ENCODE measurements at regions of chr3 and their contacts with region 1.

Region 1: DNA sequence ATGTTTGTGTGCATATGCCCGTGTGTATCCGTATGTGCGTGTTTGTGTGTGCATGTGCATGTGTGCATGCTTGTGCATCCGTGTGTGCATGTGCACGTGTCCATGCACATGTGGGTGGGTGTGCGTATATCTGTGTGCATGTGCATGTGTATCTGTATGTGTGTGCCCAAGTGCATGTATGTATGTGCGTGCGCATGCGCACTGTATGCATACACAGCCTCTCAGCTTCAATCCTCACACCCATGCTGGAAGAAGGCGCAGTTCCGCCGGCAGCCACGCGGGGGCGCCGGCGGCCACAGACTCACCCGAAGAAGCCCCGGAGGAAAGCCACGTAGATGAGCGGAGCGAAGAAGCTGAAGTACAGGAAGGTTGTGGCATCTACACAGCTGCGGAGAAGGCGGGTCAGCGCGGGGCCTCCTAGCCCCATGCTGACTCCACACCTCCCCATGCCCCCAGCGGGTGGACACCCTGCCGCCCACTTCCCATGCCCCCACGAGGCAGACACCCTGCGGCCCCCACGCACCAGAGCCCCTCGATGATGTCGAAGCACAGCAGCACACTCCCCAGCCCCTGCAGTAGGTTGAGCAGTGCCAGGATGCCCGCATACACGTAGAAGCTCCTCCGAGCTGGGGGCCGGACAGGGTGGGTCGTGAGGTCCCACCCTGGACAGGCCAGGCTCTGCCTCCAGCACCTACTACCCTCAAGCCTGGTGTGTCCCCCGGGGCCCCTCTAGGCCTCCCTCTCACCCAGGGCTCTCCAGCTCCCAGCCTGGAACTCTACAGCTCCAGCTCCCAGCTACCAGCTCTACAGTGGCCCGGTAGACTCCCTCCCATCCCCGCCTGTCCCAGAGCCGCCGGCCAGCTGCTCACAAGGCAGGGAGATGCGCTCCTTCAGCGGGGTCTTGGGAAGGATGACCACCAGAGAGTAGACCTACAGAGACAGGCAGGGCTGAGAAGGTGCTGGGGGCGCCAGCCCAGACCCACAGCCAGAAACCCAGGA is 15.4 kb downstream of the TPRA1 start:
- DNase-seq: peak; percentile 89
- H3K4me3 Mint-ChIP-seq: no peak overlapping the region
- H3K27ac Mint-ChIP-seq: peak overlapping the region; percentile 55
- H3K4me1 Mint-ChIP-seq: peaks cover 8% of the 10 kb centered on the region
- H3K27me3 Mint-ChIP-seq: no peaks in the 10 kb centered on the region

Region 2: GRCh38 chr3:127590593-127591477 is 15.7 kb after region 1 on chr3 and contains the start of gene TPRA1:
- CTCF ChIA-PET with region 1: interaction called, 44 read pairs
- POLR2A ChIA-PET with region 1: interaction called, 14 read pairs
- DNase-seq: peak; percentile 82
- H3K4me3 Mint-ChIP-seq: peak within 1 kb of the TSS; percentile 95
- H3K27ac Mint-ChIP-seq: peak within 1 kb of the TSS; percentile 97
- H3K4me1 Mint-ChIP-seq: peaks cover 31% of the 10 kb centered on the region
- H3K27me3 Mint-ChIP-seq: no peaks in the 10 kb centered on the region
- total RNA-seq, gene TPRA1: 22.6 to 23.3 TPM

Region 3: DNA sequence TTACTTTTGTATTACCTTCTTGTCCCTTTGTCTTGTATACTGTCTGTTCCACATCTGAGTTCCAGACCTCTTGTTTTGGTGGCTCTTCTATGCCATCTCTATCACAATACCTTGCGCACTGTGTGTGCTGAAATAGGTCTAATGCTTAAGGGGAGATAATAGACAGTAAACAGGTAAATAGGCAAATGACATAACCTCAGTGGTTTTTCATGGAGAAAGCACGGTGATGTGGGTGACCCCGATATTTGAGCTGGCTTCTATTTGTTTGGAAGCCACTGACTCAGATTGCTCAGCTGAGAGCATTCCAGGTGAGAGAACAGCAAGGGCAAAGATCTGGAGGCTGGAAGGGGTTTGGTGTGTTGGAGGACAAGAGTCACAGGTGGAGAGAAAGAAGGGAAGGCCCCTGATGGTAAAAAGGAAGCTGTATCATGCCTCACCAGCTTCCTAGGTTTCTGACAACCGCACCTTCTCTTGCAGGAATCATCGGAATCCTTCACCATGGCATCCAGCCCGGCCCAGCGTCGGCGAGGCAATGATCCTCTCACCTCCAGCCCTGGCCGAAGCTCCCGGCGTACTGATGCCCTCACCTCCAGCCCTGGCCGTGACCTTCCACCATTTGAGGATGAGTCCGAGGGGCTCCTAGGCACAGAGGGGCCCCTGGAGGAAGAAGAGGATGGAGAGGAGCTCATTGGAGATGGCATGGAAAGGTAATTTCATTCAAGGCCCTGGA is 23.8 kb after region 1 on chr3:
- CTCF ChIA-PET with region 1: interaction called, 30 read pairs
- POLR2A ChIA-PET with region 1: interaction called, 16 read pairs
- DNase-seq: no peak
- H3K4me3 Mint-ChIP-seq: peak overlapping the region; percentile 89
- H3K27ac Mint-ChIP-seq: peak overlapping the region; percentile 85
- H3K4me1 Mint-ChIP-seq: peaks cover 53% of the 10 kb centered on the region
- H3K27me3 Mint-ChIP-seq: no peaks in the 10 kb centered on the region

Region 4: GRCh38 chr3:127628788-127629466 is 53.7 kb after region 1 on chr3 and contains the start of gene PODXL2:
- CTCF ChIA-PET with region 1: interaction called, 10 read pairs
- POLR2A ChIA-PET with region 1: no interaction called
- DNase-seq: peak; percentile 21
- H3K4me3 Mint-ChIP-seq: peak within 1 kb of the TSS; percentile 68
- H3K27ac Mint-ChIP-seq: no peak within 1 kb of the TSS
- H3K4me1 Mint-ChIP-seq: peaks cover 25% of the 10 kb centered on the region
- H3K27me3 Mint-ChIP-seq: peaks cover 58% of the 10 kb centered on the region
- total RNA-seq, gene PODXL2: 0.95 to 1.1 TPM

Region 5: GRCh38 chr3:127637546-127637945 is 62.4 kb after region 1 on chr3:
- CTCF ChIA-PET with region 1: interaction called, 18 read pairs
- POLR2A ChIA-PET with region 1: interaction called, 3 read pairs
- DNase-seq: peak; percentile 76
- H3K4me3 Mint-ChIP-seq: no peak overlapping the region
- H3K27ac Mint-ChIP-seq: peak overlapping the region; percentile 53
- H3K4me1 Mint-ChIP-seq: peaks cover 21% of the 10 kb centered on the region
- H3K27me3 Mint-ChIP-seq: peaks cover 4% of the 10 kb centered on the region

Region 6: DNA sequence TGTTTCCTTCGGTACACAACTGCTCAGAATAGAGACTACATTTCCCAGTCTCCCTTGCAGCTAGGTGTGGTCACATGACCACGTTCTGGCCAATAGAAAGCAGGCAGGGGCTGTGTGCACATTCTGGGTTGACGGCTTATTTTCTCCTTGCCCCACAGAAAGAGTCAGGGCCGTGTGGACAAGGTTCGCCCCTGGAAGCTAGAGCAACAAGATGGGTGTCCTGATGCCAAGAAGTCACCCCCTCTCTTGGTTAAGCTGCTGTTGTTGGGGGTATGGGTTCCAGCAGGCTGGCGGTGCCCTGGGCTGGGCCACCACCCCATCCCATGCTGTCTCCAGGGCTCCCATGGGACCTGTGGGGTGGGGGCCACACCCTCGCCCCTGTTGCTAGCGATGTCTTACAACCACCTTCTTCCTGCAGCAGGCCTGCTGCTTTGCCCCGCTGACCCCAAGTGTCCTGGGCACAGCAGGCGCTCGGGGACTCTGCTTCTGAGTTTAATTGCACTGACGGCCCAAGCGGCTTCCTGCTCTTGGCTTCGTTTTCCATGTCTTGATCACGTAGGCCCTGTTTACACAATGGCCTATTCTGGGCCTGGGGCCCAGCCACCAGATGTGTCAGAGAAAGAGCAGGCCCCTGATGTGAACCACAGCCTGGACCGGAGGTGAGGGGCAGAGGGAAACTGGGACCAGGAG is 122.5 kb after region 1 on chr3:
- CTCF ChIA-PET with region 1: interaction called, 19 read pairs
- POLR2A ChIA-PET with region 1: no interaction called
- DNase-seq: peak; percentile 66
- H3K4me3 Mint-ChIP-seq: no peak overlapping the region
- H3K27ac Mint-ChIP-seq: no peak overlapping the region
- H3K4me1 Mint-ChIP-seq: peaks cover 3% of the 10 kb centered on the region
- H3K27me3 Mint-ChIP-seq: no peaks in the 10 kb centered on the region

Measured in activated CD4-positive, alpha-beta memory T cell treated with anti-CD3 and anti-CD28 coated beads, Interleukin-2, amount 10 ng/mL, durations not matched to agents 7 days and 5 days (primary cell).